GM10248 (cell line): ENCODE measurements at regions of chr4 and their contacts with region 1.

Region 1: DNA sequence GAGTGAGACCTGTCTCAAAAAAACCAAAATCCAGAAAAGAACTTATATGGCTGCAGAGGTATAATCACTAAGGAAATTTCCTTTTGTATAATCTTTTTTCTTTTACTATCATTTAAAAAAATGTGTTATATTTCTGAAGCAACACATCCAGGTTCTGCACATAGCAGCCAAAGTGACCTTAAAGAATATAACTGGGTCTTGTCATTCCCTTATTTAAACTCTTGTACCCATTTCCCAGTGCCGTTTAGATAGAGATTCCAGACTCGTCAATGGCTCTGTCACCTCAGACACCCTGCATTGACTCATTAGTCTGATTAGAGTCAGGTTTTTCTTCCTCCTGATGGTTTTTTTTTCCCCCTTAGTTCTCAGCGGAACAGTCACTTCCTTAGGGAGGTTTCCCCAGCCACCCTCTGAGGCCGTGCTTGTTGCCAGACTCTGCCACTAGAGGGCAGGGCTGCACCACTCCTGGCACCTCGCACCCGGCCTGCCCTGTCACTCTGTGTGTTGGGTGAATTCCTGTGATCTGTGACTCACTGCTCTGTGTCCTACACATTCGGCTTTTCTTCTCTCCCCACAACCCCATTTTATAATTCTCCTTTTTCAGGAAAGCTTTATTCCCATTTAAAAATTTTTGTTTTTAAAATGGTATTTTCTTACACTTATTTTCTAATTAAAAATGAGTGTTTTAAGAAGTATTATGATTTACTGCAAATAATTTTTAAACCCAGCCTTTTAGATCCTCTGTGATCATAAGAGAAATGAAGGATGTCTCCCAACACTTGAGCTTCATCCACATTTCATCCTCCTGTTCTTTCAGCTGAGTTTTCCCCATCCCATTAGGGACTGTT is 32.1 kb downstream of the HTT start:
- DNase-seq: peak; percentile 89
- CTCF ChIP-seq: peak; percentile 98

Region 2: DNA sequence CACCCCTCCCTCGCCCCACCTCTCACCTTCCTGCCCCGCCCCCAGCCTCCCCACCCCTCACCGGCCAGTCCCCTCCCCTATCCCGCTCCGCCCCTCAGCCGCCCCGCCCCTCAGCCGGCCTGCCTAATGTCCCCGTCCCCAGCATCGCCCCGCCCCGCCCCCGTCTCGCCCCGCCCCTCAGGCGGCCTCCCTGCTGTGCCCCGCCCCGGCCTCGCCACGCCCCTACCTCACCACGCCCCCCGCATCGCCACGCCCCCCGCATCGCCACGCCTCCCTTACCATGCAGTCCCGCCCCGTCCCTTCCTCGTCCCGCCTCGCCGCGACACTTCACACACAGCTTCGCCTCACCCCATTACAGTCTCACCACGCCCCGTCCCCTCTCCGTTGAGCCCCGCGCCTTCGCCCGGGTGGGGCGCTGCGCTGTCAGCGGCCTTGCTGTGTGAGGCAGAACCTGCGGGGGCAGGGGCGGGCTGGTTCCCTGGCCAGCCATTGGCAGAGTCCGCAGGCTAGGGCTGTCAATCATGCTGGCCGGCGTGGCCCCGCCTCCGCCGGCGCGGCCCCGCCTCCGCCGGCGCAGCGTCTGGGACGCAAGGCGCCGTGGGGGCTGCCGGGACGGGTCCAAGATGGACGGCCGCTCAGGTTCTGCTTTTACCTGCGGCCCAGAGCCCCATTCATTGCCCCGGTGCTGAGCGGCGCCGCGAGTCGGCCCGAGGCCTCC is 32.3 kb before region 1 on chr4 and contains the starts of genes HTT and HTT-AS:
- CTCF ChIA-PET with region 1: interaction called, 11 read pairs
- POLR2A ChIA-PET with region 1: no interaction called
- DNase-seq: peak; percentile 97
- CTCF ChIP-seq: no peak

Region 3: GRCh38 chr4:3085948-3086655 is 20.5 kb before region 1 on chr4:
- CTCF ChIA-PET with region 1: interaction called, 12 read pairs
- POLR2A ChIA-PET with region 1: no interaction called
- DNase-seq: no peak
- CTCF ChIP-seq: no peak

Region 4: DNA sequence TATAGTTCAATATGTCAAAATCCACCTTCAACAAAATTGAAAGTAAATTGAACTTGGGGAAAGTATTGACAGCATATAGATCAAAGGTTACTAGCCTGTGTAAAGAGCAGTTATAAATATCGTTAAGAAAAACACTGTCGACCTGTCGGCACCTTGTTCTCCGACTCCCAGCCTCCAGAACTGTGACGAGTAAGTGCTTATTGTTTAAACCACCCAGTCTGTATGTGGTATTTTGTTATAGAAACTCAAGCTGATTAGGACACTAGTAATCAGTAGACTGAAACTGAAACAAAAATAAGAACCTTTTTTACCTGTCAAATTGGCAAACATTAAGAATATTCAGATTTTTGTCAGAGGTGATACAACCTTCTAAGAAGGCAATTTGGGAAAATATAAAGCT is 15.1 kb before region 1 on chr4:
- CTCF ChIA-PET with region 1: interaction called, 12 read pairs
- POLR2A ChIA-PET with region 1: no interaction called
- DNase-seq: no peak
- CTCF ChIP-seq: no peak

Region 5: GRCh38 chr4:3122081-3122563 is 15.6 kb after region 1 on chr4:
- CTCF ChIA-PET with region 1: interaction called, 21 read pairs
- POLR2A ChIA-PET with region 1: no interaction called
- DNase-seq: no peak
- CTCF ChIP-seq: no peak

Region 6: DNA sequence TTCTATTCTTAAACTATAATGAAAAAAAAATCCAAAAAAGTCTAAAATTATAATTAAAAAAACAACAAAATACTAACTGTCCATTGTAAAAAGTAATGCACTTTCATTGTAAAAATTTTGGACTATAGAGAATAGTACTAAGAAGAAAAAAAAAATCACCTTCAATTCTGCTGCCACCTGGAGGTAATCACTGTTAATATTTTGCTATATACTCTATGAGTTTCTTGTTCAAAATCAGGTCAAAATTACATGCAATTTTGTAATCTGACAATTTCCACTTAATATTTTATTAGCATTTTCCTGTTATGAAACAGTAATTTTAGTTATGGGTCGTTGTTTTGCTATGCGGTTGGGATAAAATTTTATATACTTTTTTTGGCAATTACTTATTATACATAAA is 29.9 kb after region 1 on chr4:
- CTCF ChIA-PET with region 1: interaction called, 27 read pairs
- POLR2A ChIA-PET with region 1: no interaction called
- DNase-seq: no peak
- CTCF ChIP-seq: no peak